RWPE1 (cell line): ENCODE measurements at regions of chr1 and their contacts with region 1.

Region 1: DNA sequence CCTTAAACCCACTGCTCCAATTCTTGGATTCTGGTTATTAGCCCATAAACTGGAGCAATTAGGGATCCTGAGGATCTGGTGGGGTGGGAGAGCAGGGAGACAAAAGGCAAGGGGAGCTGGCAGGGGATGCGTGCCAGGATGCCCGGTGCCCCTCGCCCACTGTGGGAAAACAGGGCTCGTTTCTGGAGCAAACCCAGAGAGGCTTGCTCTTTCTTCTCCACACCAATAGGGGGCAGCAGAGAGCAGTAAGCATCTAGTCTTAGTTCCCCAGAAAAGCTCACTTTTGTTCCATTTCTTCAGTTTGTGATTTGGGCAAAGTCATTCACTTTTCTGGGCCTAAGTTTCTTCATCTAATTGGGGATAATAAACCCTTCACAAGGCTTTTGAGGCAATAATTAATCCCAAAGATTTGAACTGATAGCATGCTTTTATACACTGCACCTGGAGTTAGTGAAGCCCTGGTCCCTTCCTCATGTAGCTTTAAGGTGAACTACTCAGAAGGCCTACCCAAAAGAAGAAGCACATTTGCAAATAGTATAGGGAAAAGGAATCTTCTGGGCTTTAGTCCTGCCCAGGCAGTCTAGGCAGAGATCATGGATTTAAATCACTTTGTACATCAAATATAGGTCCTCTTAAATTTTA is 160.6 kb upstream of the USP24 start:
- DNase-seq: peak; percentile 34
- H3K27ac ChIP-seq: no peak overlapping the region
- CTCF ChIP-seq: peak; percentile 81

Region 2: DNA sequence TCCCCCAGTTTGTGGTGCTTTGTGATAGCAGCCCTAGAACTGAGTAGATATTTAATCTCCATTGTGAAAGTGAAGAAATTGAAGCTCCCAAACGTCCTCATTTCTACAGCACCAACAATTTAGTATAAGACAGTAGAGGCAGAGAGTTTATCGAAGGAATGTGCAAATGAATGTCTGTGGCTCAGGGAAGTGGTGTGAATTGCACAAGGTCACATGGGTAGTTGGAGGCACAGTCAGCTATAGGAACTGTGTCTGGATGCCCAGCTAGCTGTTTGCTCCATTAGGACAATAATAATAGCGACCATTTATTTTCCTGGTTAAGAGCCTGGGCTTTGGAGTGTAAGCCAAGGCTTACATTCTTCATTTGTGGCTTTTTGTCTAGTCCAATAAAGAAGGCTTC is 16.1 kb before region 1 on chr1:
- CTCF ChIA-PET with region 1: interaction called, 11 read pairs
- POLR2A ChIA-PET with region 1: no interaction called
- DNase-seq: no peak
- H3K27ac ChIP-seq: no peak overlapping the region
- CTCF ChIP-seq: no peak

Region 3: DNA sequence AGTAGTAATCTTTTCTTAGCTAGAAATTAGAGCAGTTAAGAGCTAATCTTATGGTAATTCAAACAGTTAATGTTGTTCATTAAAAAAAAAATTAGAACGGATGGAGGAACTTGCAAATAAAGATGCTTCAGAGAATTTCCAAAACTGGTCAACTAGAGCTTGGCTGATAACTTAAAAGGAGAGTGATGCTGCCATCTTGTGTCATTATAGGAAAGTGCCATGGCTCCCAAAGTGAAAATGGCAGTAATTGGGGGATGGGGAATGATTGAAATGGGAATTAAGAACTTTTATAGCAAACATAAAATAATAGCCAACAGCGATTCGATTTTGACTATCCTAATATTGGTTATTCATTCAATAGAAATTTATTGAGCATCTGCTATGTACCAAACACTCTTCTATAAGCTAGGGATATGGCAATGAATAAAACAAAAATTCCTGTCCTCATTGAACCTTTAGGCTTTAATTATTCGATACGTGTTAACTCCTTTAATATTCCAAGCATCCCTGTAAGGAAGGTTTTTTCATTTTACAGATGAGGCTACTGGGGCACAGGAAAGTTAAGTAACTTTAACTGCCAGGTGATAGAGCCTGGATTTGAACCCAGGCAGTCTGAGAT is 1209.3 kb after region 1 on chr1:
- CTCF ChIA-PET with region 1: interaction called, 12 read pairs
- POLR2A ChIA-PET with region 1: no interaction called
- DNase-seq: peak; percentile 59
- H3K27ac ChIP-seq: no peak overlapping the region
- CTCF ChIP-seq: peak; percentile 82